ENCODE measurements at regions of chr3 and their contacts with region 1.

Region 1: DNA sequence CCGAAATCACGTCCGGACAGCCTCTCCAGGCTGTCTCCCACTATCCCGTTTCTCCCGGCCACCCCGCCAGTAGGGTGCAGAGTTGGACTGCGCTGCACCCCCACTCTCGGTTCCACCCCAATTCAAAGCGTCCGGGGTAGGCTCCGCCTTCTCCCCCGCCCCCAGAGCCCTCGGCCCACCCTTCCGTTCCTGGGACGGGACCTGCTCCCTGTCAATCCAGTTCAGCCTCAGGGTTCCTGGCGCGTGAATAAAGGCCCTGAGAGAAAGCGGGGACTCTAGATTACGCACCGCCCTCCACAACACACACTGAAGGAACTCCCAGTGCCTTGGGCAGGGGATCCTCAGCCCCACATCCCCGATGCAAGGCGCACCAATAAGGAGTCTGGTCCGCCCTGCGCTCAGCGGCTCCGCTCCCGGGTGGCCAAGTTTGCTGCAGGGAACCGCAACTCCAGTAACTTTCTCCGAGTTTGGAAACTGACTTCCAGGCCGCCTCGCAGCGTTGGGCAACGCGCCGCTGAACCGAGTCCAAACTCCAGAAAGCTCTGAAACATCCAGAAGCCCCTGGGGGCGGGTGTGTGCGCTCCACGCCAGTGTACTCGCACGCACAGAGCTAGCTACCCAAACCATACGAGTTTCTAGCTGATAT is 1.9 kb downstream of the ADAMTS9 start:
- DNase-seq: peak; percentile 87
- H3K4me3 ChIP-seq: peak overlapping the region; percentile 49
- H3K27ac ChIP-seq: no peak overlapping the region
- H3K4me1 ChIP-seq: peaks cover 13% of the 10 kb centered on the region
- H3K27me3 ChIP-seq: no peaks in the 10 kb centered on the region
- CTCF ChIP-seq: peak; percentile 38

Region 2: DNA sequence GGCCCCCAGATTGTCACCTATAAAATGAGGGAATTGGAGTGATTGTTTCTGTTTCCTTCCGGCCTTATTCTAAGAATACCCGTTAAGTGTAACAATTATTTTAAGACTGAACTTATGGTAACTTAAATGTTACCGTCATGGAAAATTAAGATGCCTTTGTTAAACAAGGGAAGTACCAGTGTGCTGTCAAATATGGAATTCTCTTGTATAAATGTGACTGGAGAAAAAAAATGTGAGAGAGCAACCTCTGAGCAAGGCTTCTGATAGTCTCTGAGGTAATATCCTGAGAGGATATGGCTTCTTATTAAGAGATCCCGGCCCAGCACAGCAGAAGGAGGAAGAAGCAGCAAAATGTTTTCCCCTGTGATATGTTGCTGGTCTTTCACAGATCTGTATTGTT is 482.6 kb after region 1 on chr3:
- CTCF ChIA-PET with region 1: no interaction called
- POLR2A ChIA-PET with region 1: no interaction called
- intact Hi-C with region 1: loop called (anchors 5 kb)
- DNase-seq: peak; percentile 53
- H3K4me3 ChIP-seq: no peak overlapping the region
- H3K27ac ChIP-seq: no peak overlapping the region
- H3K4me1 ChIP-seq: no peaks in the 10 kb centered on the region
- H3K27me3 ChIP-seq: peaks cover 7% of the 10 kb centered on the region
- CTCF ChIP-seq: no peak